Activated CD4-positive, alpha-beta T cell treated with anti-CD3 and anti-CD28 coated beads for 36 hours (primary cell): ENCODE measurements at regions of chr10 and their contacts with region 1.

Region 1: DNA sequence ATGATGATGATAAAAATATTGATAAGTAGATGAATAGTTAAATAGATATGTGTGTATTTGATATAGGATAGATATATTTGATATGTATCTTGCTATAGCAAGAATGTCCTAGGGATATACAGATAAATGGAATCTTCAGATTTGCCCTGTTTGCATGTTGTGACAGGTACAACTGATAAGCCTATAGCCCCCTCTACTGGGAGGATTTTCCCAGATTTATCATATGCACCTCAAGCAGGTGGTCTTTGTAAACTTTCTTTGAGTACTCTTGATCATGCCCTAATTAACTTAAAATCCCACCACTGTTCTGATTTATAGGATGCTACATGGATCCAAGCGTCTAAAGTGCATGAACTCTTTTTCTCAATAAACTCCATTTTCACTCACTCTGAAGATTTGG is 1050.7 kb downstream of the SORCS3 start:
- DNase-seq: no peak
- ATAC-seq: no peak
- H3K4me3 Mint-ChIP-seq: no peak overlapping the region
- H3K27ac Mint-ChIP-seq: no peak overlapping the region
- H3K4me1 Mint-ChIP-seq: no peaks in the 10 kb centered on the region
- H3K27me3 Mint-ChIP-seq: no peaks in the 10 kb centered on the region

Region 2: DNA sequence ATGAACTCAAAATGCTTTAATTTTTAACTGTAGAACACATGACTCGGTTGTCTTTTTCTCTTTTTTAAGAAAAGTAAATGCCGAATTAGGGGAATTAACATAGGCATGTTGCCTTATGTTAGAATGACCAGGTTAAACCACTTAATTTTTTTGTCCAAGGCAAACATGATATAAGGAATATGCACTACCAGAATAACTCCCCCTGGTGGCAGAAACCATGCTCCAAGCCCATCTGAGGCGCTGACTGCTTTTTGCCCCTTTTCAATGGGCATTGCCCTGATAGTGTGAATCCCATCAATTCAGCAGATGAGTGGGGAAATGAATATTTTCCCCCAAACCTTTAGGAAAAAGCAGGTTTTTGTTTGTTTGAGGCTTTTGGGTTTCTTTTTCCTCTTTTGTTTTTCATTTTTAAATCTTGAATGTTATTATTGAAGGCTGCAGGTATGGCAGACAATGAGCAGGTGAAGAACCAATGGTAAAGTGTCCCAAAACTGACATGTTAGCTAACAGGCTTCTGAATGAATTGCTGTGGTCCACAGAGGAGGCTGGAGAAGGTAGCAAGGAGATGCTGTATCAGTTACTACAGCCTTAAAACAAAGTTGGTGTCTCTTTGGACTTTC is 766.5 kb before region 1 on chr10:
- CTCF ChIA-PET with region 1: no interaction called
- POLR2A ChIA-PET with region 1: no interaction called
- intact Hi-C with region 1: no loop called
- DNase-seq: peak; percentile 58
- ATAC-seq: no peak
- H3K4me3 Mint-ChIP-seq: no peak overlapping the region
- H3K27ac Mint-ChIP-seq: no peak overlapping the region
- H3K4me1 Mint-ChIP-seq: no peaks in the 10 kb centered on the region
- H3K27me3 Mint-ChIP-seq: no peaks in the 10 kb centered on the region

Region 3: DNA sequence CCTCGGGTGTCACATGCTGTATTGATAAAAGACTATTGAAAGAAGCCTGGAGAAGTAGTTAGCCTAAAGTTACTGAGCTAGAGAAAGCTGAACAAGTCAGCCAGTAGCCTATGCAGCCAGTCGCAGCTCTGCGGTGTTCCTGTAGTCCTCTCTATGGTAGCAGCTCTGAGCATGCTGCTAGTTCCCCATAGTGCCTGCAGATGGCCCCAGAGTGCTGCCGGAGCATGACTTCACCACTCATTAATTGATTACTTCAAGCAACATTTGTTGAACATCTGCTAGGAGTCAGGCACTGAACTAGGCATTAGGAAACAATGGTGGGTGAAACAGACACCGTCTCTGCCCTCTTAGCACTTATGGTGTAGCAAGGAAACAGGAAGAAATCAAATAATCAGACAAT is 628.0 kb before region 1 on chr10:
- CTCF ChIA-PET with region 1: no interaction called
- POLR2A ChIA-PET with region 1: no interaction called
- intact Hi-C with region 1: loop called in 1 of 2 experiments (anchors 2 kb)
- DNase-seq: peak; percentile 59
- ATAC-seq: peak; percentile 65
- H3K4me3 Mint-ChIP-seq: no peak overlapping the region
- H3K27ac Mint-ChIP-seq: no peak overlapping the region
- H3K4me1 Mint-ChIP-seq: no peaks in the 10 kb centered on the region
- H3K27me3 Mint-ChIP-seq: no peaks in the 10 kb centered on the region